ENCODE measurements at regions of chr5 and their contacts with region 1.

Region 1: GRCh38 chr5:139439013-139439903 is at the start of gene DNAJC18:
- DNase-seq: peak; percentile 93
- ATAC-seq: peak; percentile 94
- H3K4me3 ChIP-seq: peak within 1 kb of the TSS; percentile 53 to 97 (median 91)
- H3K4me3 Mint-ChIP-seq: peak within 1 kb of the TSS; percentile 97
- H3K27ac ChIP-seq: peak within 1 kb of the TSS; percentile 98 to 100
- H3K27ac Mint-ChIP-seq: peak within 1 kb of the TSS; percentile 99
- H3K4me1 ChIP-seq: peaks cover 11 to 12% of the 10 kb centered on the region in 2 donors
- H3K4me1 Mint-ChIP-seq: peaks cover 16% of the 10 kb centered on the region
- H3K27me3 ChIP-seq: no peaks in the 10 kb centered on the region
- H3K27me3 Mint-ChIP-seq: peaks cover 3% of the 10 kb centered on the region
- CTCF ChIP-seq: no peak
- total RNA-seq, gene DNAJC18: 13.6 and 16.5 TPM in 2 replicates

Region 2: GRCh38 chr5:139403787-139404483 is 35.3 kb before region 1 on chr5 and contains the start of gene SPATA24:
- CTCF ChIA-PET with region 1: interaction called, 3 read pairs
- POLR2A ChIA-PET with region 1: interaction called, 8 read pairs
- intact Hi-C with region 1: loop called (anchors 1 kb)
- DNase-seq: peak; percentile 99
- ATAC-seq: peak; percentile 85
- H3K4me3 ChIP-seq: peak within 1 kb of the TSS; percentile 50 to 73 (median 68)
- H3K4me3 Mint-ChIP-seq: peak within 1 kb of the TSS; percentile 95
- H3K27ac ChIP-seq: peak within 1 kb of the TSS; percentile 85 to 86
- H3K27ac Mint-ChIP-seq: peak within 1 kb of the TSS; percentile 97
- H3K4me1 ChIP-seq: peaks cover 33 to 43% of the 10 kb centered on the region in 2 donors
- H3K4me1 Mint-ChIP-seq: peaks cover 43% of the 10 kb centered on the region
- H3K27me3 ChIP-seq: no peaks in the 10 kb centered on the region
- H3K27me3 Mint-ChIP-seq: no peaks in the 10 kb centered on the region
- CTCF ChIP-seq: no peak
- total RNA-seq, gene SPATA24: 6.4 and 8.2 TPM in 2 replicates

Region 3: DNA sequence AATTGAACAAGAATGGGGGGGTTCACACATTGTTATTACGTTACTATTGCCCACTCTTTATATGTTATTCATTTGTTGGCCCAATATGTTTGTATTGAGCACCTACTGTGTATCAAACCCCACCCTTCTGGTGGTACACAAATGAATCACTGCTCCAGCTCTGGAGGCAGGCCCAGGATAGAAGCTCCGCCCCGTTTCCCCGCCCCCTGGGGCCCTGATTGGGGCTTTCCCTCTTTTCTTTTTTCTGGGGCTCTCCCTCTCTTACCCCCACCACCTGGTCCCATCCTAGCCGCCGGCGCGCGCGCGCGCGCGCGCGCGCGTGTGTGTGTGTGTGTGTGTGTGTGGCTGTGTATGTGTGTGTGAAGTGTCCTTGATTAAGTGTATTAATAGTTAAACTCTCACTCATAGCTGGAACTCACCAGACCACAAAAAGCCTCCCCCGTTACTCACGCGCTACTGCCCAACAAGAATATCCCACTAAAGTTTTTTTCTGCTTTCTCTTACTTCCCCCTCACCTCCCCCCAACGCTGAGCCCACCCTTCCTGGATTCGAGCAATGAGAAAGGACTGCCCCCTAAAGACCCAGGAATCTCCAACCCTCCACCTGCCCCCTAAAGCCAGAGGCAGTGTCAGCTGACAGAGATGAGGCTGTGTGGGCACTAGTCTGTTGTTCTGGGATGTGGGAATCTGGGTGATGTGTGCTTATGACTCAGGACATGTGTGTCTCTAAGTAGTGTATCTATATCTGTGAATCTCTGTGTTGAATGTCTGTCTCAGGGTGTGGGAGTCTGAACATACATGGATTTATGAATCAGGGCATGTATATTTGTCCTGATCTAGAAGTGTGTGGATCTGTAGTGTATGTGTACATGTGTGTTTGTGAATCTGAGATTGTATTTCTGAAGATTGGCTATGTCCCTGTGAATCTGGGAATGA is 212.9 kb after region 1 on chr5:
- CTCF ChIA-PET with region 1: no interaction called
- POLR2A ChIA-PET with region 1: interaction called, 10 read pairs
- intact Hi-C with region 1: no loop called
- DNase-seq: peak; percentile 92
- ATAC-seq: peak; percentile 50
- H3K4me3 ChIP-seq: peak overlapping the region; percentile 50 to 98 (median 95)
- H3K4me3 Mint-ChIP-seq: peak overlapping the region; percentile 88
- H3K27ac ChIP-seq: peak overlapping the region; percentile 71 to 90
- H3K27ac Mint-ChIP-seq: peak overlapping the region; percentile 94
- H3K4me1 ChIP-seq: peaks cover 68 to 74% of the 10 kb centered on the region in 2 donors
- H3K4me1 Mint-ChIP-seq: peaks cover 71% of the 10 kb centered on the region
- H3K27me3 ChIP-seq: no peaks in the 10 kb centered on the region
- H3K27me3 Mint-ChIP-seq: no peaks in the 10 kb centered on the region
- CTCF ChIP-seq: no peak

Measured in B cell (primary cell).